ENCODE measurements at regions of chr3 and their contacts with region 1.

Region 1: DNA sequence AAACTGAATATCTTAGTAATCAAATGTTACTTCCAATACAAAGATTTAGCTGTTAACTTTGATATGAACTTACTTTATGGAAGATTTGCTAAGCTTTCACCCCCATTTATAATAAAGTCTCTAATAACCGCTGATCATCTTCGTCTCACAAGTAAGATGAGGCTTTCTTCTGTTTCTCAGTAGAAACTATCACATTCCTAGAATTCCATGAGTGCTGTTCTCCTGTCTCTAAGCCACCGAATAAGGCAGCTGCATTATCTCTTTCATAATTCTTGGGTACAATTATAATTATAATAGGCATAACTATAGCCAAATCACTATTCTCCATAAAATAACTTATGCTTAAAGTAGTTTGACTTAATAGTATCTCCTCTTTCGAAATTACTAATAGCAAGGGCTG is 18.3 kb upstream of the SETMAR start:
- DNase-seq: no peak
- H3K4me3 ChIP-seq: no peak overlapping the region
- H3K27ac ChIP-seq: no peak overlapping the region
- H3K4me1 ChIP-seq: no peaks in the 10 kb centered on the region
- H3K27me3 ChIP-seq: no peaks in the 10 kb centered on the region
- CTCF ChIP-seq: no peak
- EP300 ChIP-seq: no peak
- POLR2A ChIP-seq: no peak

Region 2: GRCh38 chr3:3200632-3201212 is 1084.1 kb before region 1 on chr3:
- intact Hi-C with region 1: loop called (anchors 5 kb)
- DNase-seq: no peak
- H3K4me3 ChIP-seq: no peak overlapping the region
- H3K27ac ChIP-seq: no peak overlapping the region
- H3K4me1 ChIP-seq: peaks cover 0 to 4% (median 0%) of the 10 kb centered on the region in 4 donors
- H3K27me3 ChIP-seq: peaks cover 0 to 3% (median 0%) of the 10 kb centered on the region in 4 donors
- CTCF ChIP-seq: peak; percentile 81 to 86 (median 84)
- EP300 ChIP-seq: no peak
- POLR2A ChIP-seq: no peak

Region 3: GRCh38 chr3:4149296-4149695 is 135.6 kb before region 1 on chr3:
- intact Hi-C with region 1: no loop called
- DNase-seq: no peak
- H3K4me3 ChIP-seq: no peak overlapping the region
- H3K27ac ChIP-seq: no peak overlapping the region
- H3K4me1 ChIP-seq: peaks cover 0 to 2% (median 0%) of the 10 kb centered on the region in 4 donors
- H3K27me3 ChIP-seq: no peaks in the 10 kb centered on the region
- CTCF ChIP-seq: no peak
- EP300 ChIP-seq: no peak
- POLR2A ChIP-seq: no peak

Measured in esophagus muscularis mucosa (tissue), 4 donors.